Endothelial cell of umbilical vein (primary cell): ENCODE measurements at regions of chr3 and their contacts with region 1.

Region 1: GRCh38 chr3:146189519-146190173 is 28.7 kb upstream of the PLOD2 start:
- DNase-seq: peak; percentile 70
- H3K4me3 ChIP-seq: no peak overlapping the region
- H3K27ac ChIP-seq: peak overlapping the region; percentile 43
- H3K4me1 ChIP-seq: peaks cover 21% of the 10 kb centered on the region
- H3K27me3 ChIP-seq: no peaks in the 10 kb centered on the region
- CTCF ChIP-seq: peak; percentile 62 to 68
- POLR2A ChIP-seq: no peak

Region 2: DNA sequence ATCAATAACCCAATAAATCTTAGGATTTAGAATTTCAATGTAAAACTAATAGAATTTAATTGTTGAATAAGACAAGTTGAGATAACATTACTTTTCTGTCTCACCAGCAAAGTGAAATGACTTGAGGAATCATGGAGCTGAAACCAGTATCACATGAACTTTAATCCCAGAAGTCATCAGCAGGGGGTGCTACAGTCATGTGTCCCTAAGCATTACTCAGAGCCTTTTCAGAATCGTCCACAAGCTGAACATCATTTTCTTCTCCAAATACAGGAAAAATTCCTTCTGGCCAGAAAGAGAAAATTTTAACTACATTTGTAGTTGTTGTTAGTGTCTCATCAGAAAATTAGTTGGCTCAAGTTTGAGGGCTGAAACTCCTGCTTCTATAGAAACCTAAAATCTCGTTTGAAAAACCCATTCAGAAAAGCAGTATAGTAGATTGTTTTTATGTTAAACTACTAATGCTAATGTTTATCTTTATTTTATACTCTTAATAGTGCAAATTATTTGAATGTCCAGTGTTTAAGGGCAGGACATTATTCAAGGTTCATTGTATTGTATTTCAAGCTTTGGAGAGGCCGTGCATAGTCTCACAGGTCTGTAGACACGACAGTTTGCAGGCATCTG is 412.8 kb before region 1 on chr3:
- CTCF ChIA-PET with region 1: interaction called, 21 read pairs
- POLR2A ChIA-PET with region 1: no interaction called
- dilution Hi-C with region 1: no loop called
- intact Hi-C with region 1: loop called (anchors 1 kb)
- DNase-seq: peak; percentile 80
- H3K4me3 ChIP-seq: no peak overlapping the region
- H3K27ac ChIP-seq: no peak overlapping the region
- H3K4me1 ChIP-seq: no peaks in the 10 kb centered on the region
- H3K27me3 ChIP-seq: peaks cover 0 to 3% of the 10 kb centered on the region in 2 experiments
- CTCF ChIP-seq: peak; percentile 53 to 62
- POLR2A ChIP-seq: no peak

Region 3: GRCh38 chr3:146166450-146167225 is 23.0 kb before region 1 on chr3:
- CTCF ChIA-PET with region 1: interaction called, 115 read pairs
- POLR2A ChIA-PET with region 1: interaction called, 20 read pairs
- dilution Hi-C with region 1: no loop called
- intact Hi-C with region 1: loop called (anchors 2 kb)
- DNase-seq: peak; percentile 67
- H3K4me3 ChIP-seq: no peak overlapping the region
- H3K27ac ChIP-seq: peak overlapping the region; percentile 65
- H3K4me1 ChIP-seq: peaks cover 57% of the 10 kb centered on the region
- H3K27me3 ChIP-seq: no peaks in the 10 kb centered on the region
- CTCF ChIP-seq: no peak
- POLR2A ChIP-seq: no peak

Region 4: GRCh38 chr3:146200461-146201220 is 11.0 kb after region 1 on chr3:
- CTCF ChIA-PET with region 1: interaction called, 16 read pairs
- POLR2A ChIA-PET with region 1: no interaction called
- dilution Hi-C with region 1: no loop called
- intact Hi-C with region 1: no loop called
- DNase-seq: no peak
- H3K4me3 ChIP-seq: no peak overlapping the region
- H3K27ac ChIP-seq: no peak overlapping the region
- H3K4me1 ChIP-seq: peaks cover 23% of the 10 kb centered on the region
- H3K27me3 ChIP-seq: no peaks in the 10 kb centered on the region
- CTCF ChIP-seq: no peak
- POLR2A ChIP-seq: no peak

Region 5: GRCh38 chr3:146313411-146314111 is 123.9 kb after region 1 on chr3:
- CTCF ChIA-PET with region 1: interaction called, 16 read pairs
- POLR2A ChIA-PET with region 1: no interaction called
- dilution Hi-C with region 1: no loop called
- intact Hi-C with region 1: no loop called
- DNase-seq: peak; percentile 91
- H3K4me3 ChIP-seq: no peak overlapping the region
- H3K27ac ChIP-seq: peak overlapping the region; percentile 94
- H3K4me1 ChIP-seq: peaks cover 42% of the 10 kb centered on the region
- H3K27me3 ChIP-seq: no peaks in the 10 kb centered on the region
- CTCF ChIP-seq: no peak
- POLR2A ChIP-seq: peak; percentile 50